ENCODE measurements at regions of chr17 and their contacts with region 1.

Region 1: DNA sequence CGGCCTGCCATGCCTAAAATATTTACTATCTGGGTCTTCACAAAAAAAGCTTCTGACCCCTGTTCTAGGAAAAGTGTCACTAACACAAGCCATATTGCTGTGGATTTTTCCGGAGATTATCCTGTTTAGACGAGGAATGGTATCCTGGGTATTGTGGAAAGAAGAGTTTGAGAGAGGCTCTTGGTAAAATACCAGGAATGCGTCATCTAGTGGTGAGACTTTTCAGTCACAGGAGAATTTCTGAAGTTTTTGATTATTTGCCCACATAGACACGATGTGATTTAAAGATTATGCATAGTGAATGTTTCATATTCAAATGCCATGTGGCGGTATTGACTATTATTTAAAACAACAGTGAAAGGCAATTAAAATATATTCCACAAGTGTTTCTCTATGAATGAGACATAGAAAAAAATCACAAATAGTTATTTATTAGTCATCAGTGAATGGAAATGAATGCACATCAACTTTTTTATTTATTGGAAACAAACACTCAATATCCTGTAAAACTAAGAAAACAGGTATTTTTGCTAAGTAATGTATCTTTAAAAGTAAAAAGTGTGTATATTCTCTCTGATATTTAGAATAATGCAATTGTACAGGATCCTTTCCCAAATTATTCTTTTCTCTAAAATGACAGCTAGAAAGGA is 7.8 kb downstream of the KRT28 start:
- DNase-seq: peak; percentile 55
- ATAC-seq: peak; percentile 72
- H3K4me3 ChIP-seq: no peak overlapping the region
- H3K27ac ChIP-seq: no peak overlapping the region
- H3K4me1 ChIP-seq: no peaks in the 10 kb centered on the region
- H3K27me3 ChIP-seq: peaks cover 44% of the 10 kb centered on the region
- CTCF ChIP-seq: peak; percentile 71
- POLR2A ChIP-seq: no peak
- RAD21 ChIP-seq: peak; percentile 61

Region 2: DNA sequence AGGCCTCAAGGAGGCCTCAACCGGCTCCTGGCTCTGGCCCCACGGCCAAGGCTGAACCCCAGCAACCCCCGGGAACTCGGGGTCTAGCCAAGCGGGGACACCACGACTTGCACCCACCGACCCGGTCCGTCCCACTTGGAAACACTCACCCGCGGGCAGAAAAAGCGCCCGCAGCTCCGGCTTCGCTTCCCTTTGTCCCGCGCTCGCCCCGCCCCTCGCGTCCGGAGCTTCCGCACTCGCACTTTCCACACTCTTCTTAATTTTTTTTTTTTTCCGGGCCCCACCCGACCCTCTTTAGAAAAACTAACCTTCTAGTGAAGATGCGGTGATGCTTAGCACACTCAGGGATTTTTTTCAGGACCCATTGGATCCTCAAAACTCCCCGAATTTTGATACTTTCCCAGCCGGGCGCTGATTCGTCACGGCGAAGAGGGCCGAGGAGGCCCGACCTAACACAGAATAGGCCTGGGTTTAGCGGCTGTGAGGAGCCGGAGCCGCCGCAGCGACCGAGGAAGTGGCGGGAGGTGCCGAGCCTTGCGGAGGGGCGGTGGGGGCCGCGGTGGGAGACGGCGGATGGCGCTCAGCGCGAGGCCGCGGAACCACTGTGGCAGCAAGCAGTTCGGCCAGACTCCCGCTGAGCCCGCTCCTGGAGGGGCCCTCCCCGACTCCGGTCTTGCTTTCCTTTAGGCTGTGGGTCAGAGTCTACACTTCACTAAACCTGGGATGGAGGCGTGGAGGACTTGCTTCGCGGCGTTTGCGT is 144.1 kb before region 1 on chr17 and contains the start of gene SMARCE1:
- CTCF ChIA-PET with region 1: no interaction called
- POLR2A ChIA-PET with region 1: no interaction called
- dilution Hi-C with region 1: no loop called
- in situ Hi-C with region 1: no loop called
- intact Hi-C with region 1: loop called (anchors 1 kb)
- DNase-seq: peak; percentile 67
- ATAC-seq: peak; percentile 84
- H3K4me3 ChIP-seq: peak within 1 kb of the TSS; percentile 93
- H3K27ac ChIP-seq: peak within 1 kb of the TSS; percentile 94
- H3K4me1 ChIP-seq: peaks cover 5% of the 10 kb centered on the region
- H3K27me3 ChIP-seq: no peaks in the 10 kb centered on the region
- CTCF ChIP-seq: no peak
- POLR2A ChIP-seq: peak; percentile 75
- RAD21 ChIP-seq: no peak
- total RNA-seq, gene SMARCE1: 119 and 169 TPM in 2 replicates

Region 3: DNA sequence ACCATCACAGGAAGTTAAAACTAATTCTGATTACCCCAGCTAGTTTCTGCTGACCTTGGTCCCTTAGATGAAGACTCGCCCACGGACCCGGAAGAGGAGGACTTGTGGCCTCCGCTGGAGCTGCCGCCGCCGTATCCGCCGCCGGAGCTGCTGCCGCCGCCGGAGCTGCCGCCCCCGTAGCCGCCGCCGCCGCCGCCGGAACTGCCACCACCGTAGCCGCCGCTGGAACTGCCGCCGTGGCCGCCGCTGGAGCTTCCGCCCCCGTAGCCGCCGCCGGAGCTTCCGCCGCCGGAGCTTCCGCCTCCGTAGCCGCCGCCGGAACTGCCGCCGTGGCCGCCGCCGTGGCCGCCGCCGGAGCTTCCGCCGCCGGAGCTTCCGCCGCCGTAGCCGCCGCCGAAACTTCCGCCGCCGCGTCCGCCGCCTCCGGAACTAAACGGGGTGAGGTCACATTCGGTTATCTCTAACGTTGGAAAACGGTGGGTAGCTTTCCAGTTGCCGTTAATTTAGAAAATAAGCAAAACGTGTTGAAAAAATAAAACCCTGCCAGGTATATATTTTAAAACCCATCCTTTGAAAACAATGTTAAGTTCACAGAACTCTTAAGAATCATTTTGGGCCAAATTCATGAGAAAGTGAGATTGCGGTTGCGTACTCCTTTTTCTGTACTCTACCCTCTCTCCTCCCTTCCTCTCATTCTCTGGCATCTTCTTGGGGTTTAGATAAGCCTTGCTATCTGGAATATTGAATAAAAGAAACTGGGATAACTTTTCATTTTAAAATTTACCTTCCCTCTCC is 27.0 kb after region 1 on chr17:
- CTCF ChIA-PET with region 1: no interaction called
- POLR2A ChIA-PET with region 1: no interaction called
- dilution Hi-C with region 1: no loop called
- in situ Hi-C with region 1: no loop called
- intact Hi-C with region 1: no loop called
- DNase-seq: peak; percentile 73
- ATAC-seq: peak; percentile 86
- H3K4me3 ChIP-seq: peak overlapping the region; percentile 99
- H3K27ac ChIP-seq: peak overlapping the region; percentile 79
- H3K4me1 ChIP-seq: peaks cover 5% of the 10 kb centered on the region; the same call in 1 of the 2 replicates
- H3K27me3 ChIP-seq: no peaks in the 10 kb centered on the region
- CTCF ChIP-seq: 0 out of 2 replicates have a peak, but pooled peaks have one; percentile 0
- POLR2A ChIP-seq: peak; percentile 68
- RAD21 ChIP-seq: no peak